ENCODE measurements at regions of chr6 and their contacts with region 1.

Region 1: GRCh38 chr6:10793695-10794094 is 44.6 kb downstream of the MAK start:
- DNase-seq: no peak
- ATAC-seq: no peak
- H3K4me3 ChIP-seq: no peak overlapping the region
- H3K27ac ChIP-seq: no peak overlapping the region
- H3K4me1 ChIP-seq: peaks cover 8% of the 10 kb centered on the region; the same call in 1 of the 2 replicates
- H3K27me3 ChIP-seq: no peaks in the 10 kb centered on the region
- CTCF ChIP-seq: no peak

Region 2: DNA sequence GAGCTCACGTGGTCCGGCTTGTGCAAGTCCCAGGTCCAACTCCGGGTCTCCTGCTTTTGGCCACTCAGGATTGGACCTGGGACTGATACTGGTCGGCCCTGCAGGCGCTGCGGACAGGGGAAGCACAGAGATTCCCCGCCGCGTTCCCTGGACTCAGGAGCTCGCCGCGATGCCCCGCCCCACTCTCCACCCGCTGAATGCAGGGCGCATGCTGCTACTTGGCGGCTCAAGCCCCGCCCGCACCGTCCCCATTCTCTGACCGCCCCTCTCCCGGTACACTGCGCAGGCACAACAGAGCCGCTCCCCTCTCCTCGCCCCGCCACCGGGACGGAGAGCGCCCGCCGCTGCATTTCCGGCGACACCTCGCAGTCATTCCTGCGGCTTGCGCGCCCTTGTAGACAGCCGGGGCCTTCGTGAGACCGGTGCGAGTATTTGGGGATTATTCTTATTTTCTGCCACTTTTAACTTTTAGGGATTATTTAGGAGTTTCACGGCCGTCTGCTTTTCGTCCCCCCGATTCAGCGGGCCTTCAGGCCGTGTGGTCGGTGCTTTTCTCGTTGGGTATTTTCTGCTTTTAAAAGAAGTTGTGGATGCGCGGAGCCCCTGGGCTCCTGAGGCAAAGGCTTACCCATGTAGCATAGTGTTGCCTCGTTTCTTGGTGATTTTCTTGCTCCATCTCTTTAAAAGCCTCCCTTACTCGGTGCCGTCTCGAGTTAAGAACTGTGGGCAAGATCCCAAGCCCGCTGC is 70.7 kb before region 1 on chr6 and contains the start of gene TMEM14C:
- CTCF ChIA-PET with region 1: no interaction called
- POLR2A ChIA-PET with region 1: no interaction called
- in situ Hi-C with region 1: no loop called
- intact Hi-C with region 1: loop called (anchors 10 kb)
- DNase-seq: peak; percentile 91
- ATAC-seq: peak; percentile 100
- H3K4me3 ChIP-seq: peak within 1 kb of the TSS; percentile 77 to 91
- H3K27ac ChIP-seq: peak within 1 kb of the TSS; percentile 95
- H3K4me1 ChIP-seq: peaks cover 18% of the 10 kb centered on the region
- H3K27me3 ChIP-seq: no peaks in the 10 kb centered on the region
- CTCF ChIP-seq: no peak
- total RNA-seq, gene TMEM14C: 159 TPM